ENCODE measurements at regions of chr6 and their contacts with region 1.

Region 1: DNA sequence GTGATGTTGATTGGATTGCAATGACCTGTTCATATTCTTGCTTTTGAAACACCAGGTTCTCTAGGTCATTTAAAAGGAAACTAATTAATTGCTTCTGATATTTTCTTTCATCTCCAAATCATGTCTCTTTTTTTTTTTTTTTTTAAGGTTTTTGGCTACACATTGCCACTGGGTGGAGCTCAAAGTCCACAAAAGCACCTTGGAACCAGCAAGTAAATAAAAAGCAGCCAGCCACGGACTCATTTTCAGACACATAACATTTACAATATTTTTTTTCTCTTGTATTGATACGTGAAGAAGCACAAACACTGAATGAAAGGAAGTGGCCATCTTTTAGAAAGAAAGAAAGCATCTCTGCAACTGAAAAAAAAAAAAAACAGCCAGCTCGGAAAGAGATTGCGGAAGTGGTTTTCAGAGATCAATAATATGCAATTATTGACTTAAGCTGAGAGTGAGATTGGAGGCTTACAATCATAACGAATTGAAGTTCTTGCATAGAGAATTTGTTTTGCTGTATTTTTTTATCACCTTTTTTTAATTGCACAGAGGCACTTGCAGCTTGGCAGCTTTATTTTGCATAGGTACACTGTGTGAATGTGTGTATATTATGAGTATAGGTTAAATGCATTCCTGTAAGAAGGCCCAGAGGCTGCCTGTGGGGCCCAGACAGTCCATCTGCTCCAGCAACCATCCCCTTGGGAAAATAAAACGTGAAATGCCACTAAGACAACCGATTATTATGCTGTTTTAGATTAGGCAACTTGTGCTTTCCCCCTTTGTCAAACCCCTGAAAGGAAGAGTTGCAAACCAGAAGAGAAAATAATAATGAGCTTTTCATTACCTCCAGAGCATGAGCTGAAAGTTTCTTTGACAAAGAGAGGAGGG is 28.2 kb downstream of the CGA start:
- DNase-seq: peak; percentile 42
- H3K4me3 Mint-ChIP-seq: peak overlapping the region; percentile 50
- H3K27ac Mint-ChIP-seq: no peak overlapping the region
- H3K4me1 Mint-ChIP-seq: peaks cover 9% of the 10 kb centered on the region
- H3K27me3 Mint-ChIP-seq: peaks cover 29% of the 10 kb centered on the region
- CTCF ChIP-seq: peak; percentile 51

Region 2: GRCh38 chr6:87078983-87079616 is 12.4 kb after region 1 on chr6:
- CTCF ChIA-PET with region 1: interaction called, 12 read pairs
- intact Hi-C with region 1: no loop called
- DNase-seq: peak; percentile 83
- H3K4me3 Mint-ChIP-seq: no peak overlapping the region
- H3K27ac Mint-ChIP-seq: no peak overlapping the region
- H3K4me1 Mint-ChIP-seq: peaks cover 11% of the 10 kb centered on the region
- H3K27me3 Mint-ChIP-seq: peaks cover 41% of the 10 kb centered on the region
- CTCF ChIP-seq: peak; percentile 87

Region 3: DNA sequence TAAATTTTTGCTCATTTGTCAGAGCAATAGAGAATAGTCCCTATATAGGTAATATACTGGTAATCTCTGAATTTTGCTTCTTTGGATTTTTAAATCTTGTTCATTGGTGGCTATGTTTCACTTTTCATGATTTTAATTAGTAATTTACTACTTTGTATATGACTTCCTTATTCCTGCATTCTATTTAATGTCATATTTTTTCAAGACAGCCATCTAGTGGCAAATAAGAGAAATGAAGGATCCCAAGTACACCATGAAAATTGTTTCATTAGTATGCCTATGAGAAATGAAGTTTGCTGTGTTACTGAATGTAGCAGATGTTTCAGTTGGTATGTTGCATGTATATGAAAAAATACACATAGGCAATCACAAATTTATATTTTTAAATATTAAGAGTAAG is 171.1 kb after region 1 on chr6:
- CTCF ChIA-PET with region 1: interaction called, 5 read pairs
- intact Hi-C with region 1: loop called (anchors 5 kb)
- DNase-seq: no peak
- H3K4me3 Mint-ChIP-seq: no peak overlapping the region
- H3K27ac Mint-ChIP-seq: no peak overlapping the region
- H3K4me1 Mint-ChIP-seq: no peaks in the 10 kb centered on the region
- H3K27me3 Mint-ChIP-seq: no peaks in the 10 kb centered on the region
- CTCF ChIP-seq: peak; percentile 48

Measured in Calu3 (cell line).